B cell (primary cell): ENCODE measurements at regions of chr12 and their contacts with region 1.

Region 1: DNA sequence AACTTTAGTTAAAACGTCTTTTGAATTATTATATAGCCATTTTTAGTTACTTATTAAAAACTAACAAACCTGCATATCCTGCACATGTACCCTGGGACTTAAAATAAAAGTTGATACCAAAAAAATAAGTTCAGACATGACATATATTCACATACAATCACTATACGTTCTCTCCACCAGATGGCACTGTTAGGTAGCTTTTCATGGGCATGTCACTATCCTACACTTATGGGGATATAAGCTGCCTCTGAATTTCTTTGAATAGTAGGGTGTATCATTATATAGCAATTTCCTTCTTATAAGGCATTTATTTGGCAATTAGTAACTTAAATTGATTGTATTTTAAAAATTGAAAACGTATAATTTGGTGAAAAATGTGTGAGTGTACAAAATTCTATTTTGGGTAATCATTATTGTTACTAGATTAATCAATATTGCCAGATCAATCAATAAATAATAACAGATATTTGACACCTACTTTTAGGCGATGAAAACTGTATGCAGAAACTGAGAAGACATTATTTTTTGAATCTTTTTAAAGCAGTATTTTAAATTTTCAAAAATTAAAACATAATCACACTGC is 31.8 kb upstream of the OR10A7 start:
- DNase-seq: peak; percentile 82
- ATAC-seq: peak; percentile 47
- H3K4me3 ChIP-seq: no peak overlapping the region
- H3K4me3 Mint-ChIP-seq: no peak overlapping the region
- H3K27ac ChIP-seq: no peak overlapping the region
- H3K27ac Mint-ChIP-seq: no peak overlapping the region
- H3K4me1 ChIP-seq: no peaks in the 10 kb centered on the region
- H3K4me1 Mint-ChIP-seq: no peaks in the 10 kb centered on the region
- H3K27me3 ChIP-seq: peaks cover 0 to 13% (median 1%) of the 10 kb centered on the region in 4 experiments
- H3K27me3 Mint-ChIP-seq: peaks cover 38% of the 10 kb centered on the region
- CTCF ChIP-seq: peak; percentile 93

Region 2: DNA sequence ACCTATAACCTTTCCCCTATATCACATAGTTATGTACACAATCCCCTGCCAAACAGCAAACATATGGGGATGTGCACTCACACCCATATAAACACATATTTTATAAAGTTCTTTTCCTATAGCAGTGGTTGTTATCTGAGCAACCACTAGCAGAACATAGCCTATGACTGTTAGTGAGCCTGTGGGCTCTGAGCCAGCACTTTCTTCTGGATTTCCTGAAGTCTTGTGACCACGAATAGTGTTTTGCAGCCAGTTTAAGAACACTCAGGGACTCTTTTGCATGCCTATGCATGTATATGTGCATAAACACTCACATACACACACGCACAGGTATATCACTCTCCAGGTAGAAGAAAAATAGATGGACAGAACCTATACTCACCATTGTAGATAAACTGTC is 221.6 kb before region 1 on chr12:
- CTCF ChIA-PET with region 1: no interaction called
- POLR2A ChIA-PET with region 1: no interaction called
- intact Hi-C with region 1: no loop called
- DNase-seq: no peak
- ATAC-seq: no peak
- H3K4me3 ChIP-seq: no peak overlapping the region
- H3K4me3 Mint-ChIP-seq: no peak overlapping the region
- H3K27ac ChIP-seq: no peak overlapping the region
- H3K27ac Mint-ChIP-seq: no peak overlapping the region
- H3K4me1 ChIP-seq: peaks cover 0 to 3% of the 10 kb centered on the region in 2 donors
- H3K4me1 Mint-ChIP-seq: peaks cover 2% of the 10 kb centered on the region
- H3K27me3 ChIP-seq: no peaks in the 10 kb centered on the region
- H3K27me3 Mint-ChIP-seq: no peaks in the 10 kb centered on the region
- CTCF ChIP-seq: no peak

Region 3: DNA sequence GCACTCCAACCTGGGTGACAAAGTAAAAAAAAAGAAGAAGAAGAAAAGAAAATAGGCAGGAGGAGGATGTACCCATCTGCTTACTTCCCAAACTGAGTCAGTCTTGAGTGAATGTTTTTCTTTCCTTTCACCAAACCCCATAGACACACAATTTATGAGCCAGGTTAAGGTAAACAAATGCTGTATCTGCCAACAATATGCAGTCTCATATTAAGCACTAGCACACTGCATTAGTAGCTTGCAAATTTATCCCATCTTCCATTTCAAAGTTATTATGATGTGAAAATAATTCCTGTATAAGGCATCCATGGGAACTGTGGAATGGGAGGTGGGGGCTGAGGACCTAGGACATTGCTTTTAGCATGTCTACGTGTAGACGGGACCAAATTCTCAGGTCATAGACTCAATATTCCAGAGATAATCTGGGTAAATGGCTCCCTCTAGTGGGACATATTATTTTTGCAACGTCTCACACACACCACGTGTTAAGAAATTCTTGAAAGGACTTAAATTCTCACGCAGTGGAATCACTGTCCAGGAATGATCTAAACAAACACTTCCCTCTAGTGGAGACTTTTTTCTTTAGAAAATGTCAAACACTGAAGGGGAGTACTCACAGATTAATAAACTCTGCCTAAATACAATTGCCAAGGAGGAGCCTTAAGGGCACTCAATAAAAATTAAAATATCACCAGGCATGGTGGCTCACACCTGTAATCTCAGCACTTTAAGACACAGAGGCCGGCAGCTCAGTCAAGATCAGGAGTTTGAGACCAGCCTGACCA is 430.5 kb after region 1 on chr12:
- CTCF ChIA-PET with region 1: interaction called, 95 read pairs
- POLR2A ChIA-PET with region 1: no interaction called
- intact Hi-C with region 1: no loop called
- DNase-seq: peak; percentile 88
- ATAC-seq: peak; percentile 88
- H3K4me3 ChIP-seq: no peak overlapping the region
- H3K4me3 Mint-ChIP-seq: no peak overlapping the region
- H3K27ac ChIP-seq: no peak overlapping the region
- H3K27ac Mint-ChIP-seq: no peak overlapping the region
- H3K4me1 ChIP-seq: peaks cover 0 to 3% of the 10 kb centered on the region in 2 donors
- H3K4me1 Mint-ChIP-seq: no peaks in the 10 kb centered on the region
- H3K27me3 ChIP-seq: peaks cover 0 to 5% (median 2%) of the 10 kb centered on the region in 4 experiments
- H3K27me3 Mint-ChIP-seq: peaks cover 30% of the 10 kb centered on the region
- CTCF ChIP-seq: peak; percentile 93

Region 4: GRCh38 chr12:56529290-56530055 is 1340.4 kb after region 1 on chr12:
- CTCF ChIA-PET with region 1: no interaction called
- POLR2A ChIA-PET with region 1: no interaction called
- intact Hi-C with region 1: no loop called
- DNase-seq: no peak
- ATAC-seq: no peak
- H3K4me3 ChIP-seq: no peak overlapping the region
- H3K4me3 Mint-ChIP-seq: no peak overlapping the region
- H3K27ac ChIP-seq: no peak overlapping the region
- H3K27ac Mint-ChIP-seq: no peak overlapping the region
- H3K4me1 ChIP-seq: no peaks in the 10 kb centered on the region
- H3K4me1 Mint-ChIP-seq: no peaks in the 10 kb centered on the region
- H3K27me3 ChIP-seq: no peaks in the 10 kb centered on the region
- H3K27me3 Mint-ChIP-seq: no peaks in the 10 kb centered on the region
- CTCF ChIP-seq: no peak